MCF 10A (cell line): ENCODE measurements at regions of chr2 and their contacts with region 1.

Region 1: GRCh38 chr2:48471048-48471474 is 58.9 kb upstream of the STON1 start:
- DNase-seq: peak; percentile 71
- H3K4me3 Mint-ChIP-seq: no peak overlapping the region
- H3K27ac Mint-ChIP-seq: no peak overlapping the region
- H3K4me1 Mint-ChIP-seq: no peaks in the 10 kb centered on the region
- H3K27me3 Mint-ChIP-seq: no peaks in the 10 kb centered on the region
- CTCF ChIP-seq: peak; percentile 47

Region 2: GRCh38 chr2:48452108-48452507 is 19.0 kb before region 1 on chr2:
- CTCF ChIA-PET with region 1: interaction called, 47 read pairs
- POLR2A ChIA-PET with region 1: interaction called, 4 read pairs
- intact Hi-C with region 1: no loop called
- DNase-seq: no peak
- H3K4me3 Mint-ChIP-seq: no peak overlapping the region
- H3K27ac Mint-ChIP-seq: no peak overlapping the region
- H3K4me1 Mint-ChIP-seq: peaks cover 9% of the 10 kb centered on the region
- H3K27me3 Mint-ChIP-seq: no peaks in the 10 kb centered on the region
- CTCF ChIP-seq: no peak

Region 3: DNA sequence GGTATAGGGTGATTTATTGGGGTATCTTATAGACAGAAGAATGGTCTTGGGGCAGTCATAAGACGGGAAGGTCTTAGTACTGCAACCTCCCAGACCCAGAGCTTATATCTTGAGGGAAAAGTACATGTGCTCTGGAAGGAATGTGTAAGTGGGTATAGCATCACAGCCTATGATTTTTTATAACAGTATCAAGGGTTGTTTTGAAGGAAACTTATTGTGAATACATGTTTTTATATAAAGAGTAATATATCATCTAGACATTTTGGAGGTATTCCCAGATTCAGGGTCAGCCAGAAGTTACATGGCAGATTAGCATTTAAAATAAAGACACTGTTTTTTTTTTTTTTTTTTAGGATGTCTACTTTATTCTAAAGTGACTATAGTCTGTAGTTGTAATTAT is 11.3 kb after region 1 on chr2:
- CTCF ChIA-PET with region 1: interaction called, 23 read pairs
- POLR2A ChIA-PET with region 1: interaction called, 3 read pairs
- intact Hi-C with region 1: no loop called
- DNase-seq: peak; percentile 13
- H3K4me3 Mint-ChIP-seq: no peak overlapping the region
- H3K27ac Mint-ChIP-seq: no peak overlapping the region
- H3K4me1 Mint-ChIP-seq: peaks cover 6% of the 10 kb centered on the region
- H3K27me3 Mint-ChIP-seq: no peaks in the 10 kb centered on the region
- CTCF ChIP-seq: no peak

Region 4: DNA sequence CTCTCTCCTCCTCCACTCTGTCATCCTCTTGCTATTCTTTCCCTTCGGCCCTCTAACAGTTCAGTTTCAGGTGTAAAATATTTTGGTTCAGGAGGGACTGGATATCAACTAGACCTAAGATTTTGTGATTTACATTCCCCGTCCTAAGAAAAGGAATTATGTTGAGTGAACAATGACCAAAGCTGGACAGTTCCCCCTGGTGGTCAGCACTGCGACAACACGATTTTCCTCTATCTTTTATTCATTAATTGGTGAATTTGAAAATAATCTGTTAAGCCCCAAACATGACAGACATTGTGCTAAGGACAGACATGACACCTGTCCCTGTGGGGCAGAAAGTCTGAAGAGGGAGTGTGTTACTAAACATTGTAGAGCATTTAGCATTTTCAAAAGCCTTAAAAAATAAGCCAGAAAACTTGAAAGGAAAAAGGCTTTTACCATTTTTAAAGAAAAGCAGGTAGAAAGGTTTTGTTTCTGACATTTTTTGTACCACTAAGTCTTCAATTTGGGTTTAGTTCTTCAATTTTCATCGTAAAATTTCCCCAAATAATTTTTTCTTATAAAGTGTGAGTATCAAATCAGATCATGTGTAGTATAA is 118.2 kb after region 1 on chr2:
- CTCF ChIA-PET with region 1: interaction called, 8 read pairs
- POLR2A ChIA-PET with region 1: no interaction called
- intact Hi-C with region 1: loop called (anchors 1 kb)
- DNase-seq: peak; percentile 49
- H3K4me3 Mint-ChIP-seq: no peak overlapping the region
- H3K27ac Mint-ChIP-seq: no peak overlapping the region
- H3K4me1 Mint-ChIP-seq: no peaks in the 10 kb centered on the region
- H3K27me3 Mint-ChIP-seq: no peaks in the 10 kb centered on the region
- CTCF ChIP-seq: peak; percentile 71